K562 (cell line): ENCODE measurements at regions of chr2 and their contacts with region 1.

Region 1: DNA sequence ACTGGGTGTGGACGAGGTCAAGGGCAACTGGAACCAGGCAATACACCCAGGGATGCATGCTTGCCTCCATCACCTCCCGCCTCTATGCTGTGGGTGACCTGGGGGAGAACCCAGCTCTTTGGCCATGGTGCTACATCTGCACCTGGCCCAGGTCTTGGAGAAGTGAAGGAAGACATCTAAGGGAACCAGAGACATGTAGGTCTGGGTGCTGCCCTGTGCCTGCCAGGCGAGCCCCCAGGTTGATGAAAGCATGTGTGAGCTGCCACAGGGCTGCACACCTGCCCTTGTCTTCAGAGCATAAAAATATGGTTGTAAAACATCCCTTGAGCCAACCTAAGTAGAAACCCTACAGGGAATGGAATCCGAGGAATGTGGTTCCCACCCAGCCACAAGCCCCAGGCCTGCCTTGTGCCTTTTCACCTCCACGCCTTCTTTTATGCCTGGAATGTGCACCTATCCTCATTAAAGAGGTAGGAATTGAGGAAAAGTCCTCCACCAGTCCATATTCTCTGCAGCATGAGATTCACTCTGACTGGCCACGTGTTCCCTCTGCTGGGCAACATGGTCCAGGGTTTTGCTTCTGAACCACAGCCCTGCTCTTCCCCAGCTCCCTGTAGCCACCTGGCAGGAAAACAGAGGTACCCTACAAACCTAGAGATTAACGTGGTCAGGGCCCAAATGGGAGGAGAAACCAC is 788.1 kb upstream of the RAB6C start:
- DNase-seq: no peak
- ATAC-seq: no peak
- H3K4me3 ChIP-seq: no peak overlapping the region
- H3K27ac ChIP-seq: no peak overlapping the region
- H3K4me1 ChIP-seq: no peaks in the 10 kb centered on the region
- H3K27me3 ChIP-seq: peaks cover 0 to 19% of the 10 kb centered on the region in 2 experiments; a peak in 4 of 5 replicates
- CTCF ChIP-seq: no peak
- EP300 ChIP-seq: no peak
- POLR2A ChIP-seq: no peak
- RAD21 ChIP-seq: no peak

Region 2: DNA sequence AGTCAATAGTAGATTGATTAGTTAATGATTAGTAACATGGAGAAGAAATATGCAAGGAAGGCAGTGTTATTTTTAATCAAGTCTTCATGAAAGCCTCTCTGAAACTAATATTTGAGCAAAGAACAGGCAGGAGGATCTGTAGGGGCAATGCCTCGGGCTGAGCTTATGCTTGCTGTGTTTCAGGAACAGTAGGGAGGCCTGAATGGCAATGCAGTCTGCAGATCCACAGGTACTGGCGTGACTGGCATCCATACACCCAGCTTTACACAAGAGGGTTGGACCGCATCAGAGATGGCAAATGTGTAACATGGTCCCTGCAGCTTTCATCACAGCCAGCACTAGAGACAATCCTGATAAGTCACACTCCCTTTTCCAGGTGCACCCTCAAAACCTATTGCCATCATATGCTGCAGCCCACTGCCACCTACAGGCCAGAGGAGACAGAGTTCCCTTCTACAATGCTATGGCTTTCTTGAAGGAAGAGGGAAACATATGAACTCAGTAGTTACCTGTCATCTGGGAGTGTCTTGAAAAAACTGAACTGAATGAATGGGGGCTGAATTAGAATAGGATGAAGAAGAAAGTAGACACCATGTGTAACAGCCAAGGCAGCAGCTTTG is 205.7 kb after region 1 on chr2:
- CTCF ChIA-PET with region 1: no interaction called
- POLR2A ChIA-PET with region 1: no interaction called
- in situ Hi-C with region 1: no loop called
- intact Hi-C with region 1: loop called (anchors 10 kb)
- DNase-seq: peak; percentile 14 to 47 (median 25)
- ATAC-seq: peak; percentile 77
- H3K4me3 ChIP-seq: no peak overlapping the region
- H3K27ac ChIP-seq: no peak overlapping the region
- H3K4me1 ChIP-seq: no peaks in the 10 kb centered on the region
- H3K27me3 ChIP-seq: no peaks in the 10 kb centered on the region
- CTCF ChIP-seq: peak; percentile 62 to 70 (median 67)
- EP300 ChIP-seq: no peak
- POLR2A ChIP-seq: no peak
- RAD21 ChIP-seq: peak; percentile 51 to 61